Heart left ventricle (tissue), 16 donors: ENCODE measurements at regions of chr2 and their contacts with region 1.

Region 1: GRCh38 chr2:70919672-70920366 is 15.9 kb upstream of the ATP6V1B1 start:
- DNase-seq: peak; percentile 75 to 89 (median 78)
- ATAC-seq: peak in 3 of 4 donors; percentile 84 to 91 (median 87)
- H3K4me3 ChIP-seq: no peak overlapping the region
- H3K27ac ChIP-seq: no peak overlapping the region
- H3K4me1 ChIP-seq: peaks cover 0 to 3% (median 0%) of the 10 kb centered on the region in 12 donors
- H3K27me3 ChIP-seq: peaks cover 0 to 25% (median 13%) of the 10 kb centered on the region in 9 donors
- CTCF ChIP-seq: peak; percentile 81 to 94 (median 89)
- POLR2A ChIP-seq: no peak

Region 2: DNA sequence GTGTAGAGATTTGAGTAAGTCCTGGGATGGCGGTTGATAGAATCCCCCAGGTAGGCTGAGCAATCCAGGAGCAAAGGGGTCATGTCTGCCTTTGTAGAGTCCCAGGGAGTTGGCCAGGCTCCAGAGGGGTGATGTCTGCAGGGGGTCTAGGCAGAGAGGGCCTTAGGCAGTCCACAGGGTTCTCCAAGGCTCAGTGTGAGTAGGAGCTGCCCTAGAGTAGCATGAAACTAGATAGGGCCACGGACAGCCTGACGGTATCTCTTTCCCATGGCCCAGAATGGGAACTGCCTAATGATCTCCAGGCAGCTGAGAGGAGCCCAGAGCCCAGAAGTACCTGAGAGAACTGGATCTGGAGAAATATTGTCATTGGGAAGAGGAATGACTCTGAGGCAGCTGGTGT is 608.9 kb before region 1 on chr2:
- intact Hi-C with region 1: loop called in 1 of 10 experiments (anchors 10 kb)
- DNase-seq: no peak
- ATAC-seq: no peak
- H3K4me3 ChIP-seq: no peak overlapping the region
- H3K27ac ChIP-seq: no peak overlapping the region
- H3K4me1 ChIP-seq: no peaks in the 10 kb centered on the region
- H3K27me3 ChIP-seq: peaks cover 0 to 10% (median 0%) of the 10 kb centered on the region in 9 donors
- CTCF ChIP-seq: no peak
- POLR2A ChIP-seq: no peak

Region 3: GRCh38 chr2:70656421-70657010 is 263.3 kb before region 1 on chr2:
- intact Hi-C with region 1: loop called in 1 of 10 experiments (anchors 10 kb)
- DNase-seq: no peak
- ATAC-seq: no peak
- H3K4me3 ChIP-seq: no peak overlapping the region
- H3K27ac ChIP-seq: no peak overlapping the region
- H3K4me1 ChIP-seq: no peaks in the 10 kb centered on the region
- H3K27me3 ChIP-seq: peaks cover 0 to 48% (median 7%) of the 10 kb centered on the region in 9 donors
- CTCF ChIP-seq: no peak
- POLR2A ChIP-seq: no peak

Region 4: DNA sequence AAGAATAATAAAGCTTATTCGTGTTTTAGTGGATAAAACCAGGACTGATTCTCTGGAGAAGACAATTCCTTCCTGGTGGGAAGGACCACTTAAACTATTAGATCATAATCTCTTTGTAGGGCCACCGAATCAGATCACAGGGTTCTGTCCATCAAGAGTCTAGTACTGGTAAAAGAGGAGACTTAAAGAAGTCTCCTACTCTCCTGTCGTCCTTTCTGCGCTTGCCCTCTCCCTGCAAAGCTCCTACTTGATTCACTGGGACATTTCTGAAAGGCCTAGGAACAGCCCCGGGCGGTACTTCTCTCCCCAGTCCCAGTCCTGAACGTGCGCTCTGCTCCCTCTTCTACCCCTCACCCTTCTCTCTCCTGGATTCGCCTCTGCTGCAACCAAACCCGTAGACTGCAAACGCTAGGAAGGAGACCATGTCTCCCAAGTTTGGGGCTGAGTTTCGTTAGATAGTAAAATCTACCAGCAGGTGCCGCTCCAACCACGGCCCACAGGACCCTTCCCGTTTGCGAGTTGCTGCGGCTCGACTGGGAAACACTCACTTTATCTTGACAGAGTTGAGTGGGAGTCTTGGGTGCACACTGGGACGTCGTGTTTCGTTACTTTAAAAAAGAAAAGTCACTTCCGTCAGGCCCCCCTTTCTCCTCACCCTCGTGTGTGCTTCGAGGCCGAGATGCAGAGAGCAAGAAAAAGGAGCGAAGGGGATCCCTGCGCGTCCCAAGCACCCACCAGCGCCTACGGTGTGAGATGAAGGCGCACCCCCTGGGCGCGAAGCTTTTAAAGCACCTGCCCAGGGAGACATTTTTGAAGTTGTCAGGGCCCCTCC is 130.3 kb before region 1 on chr2:
- intact Hi-C with region 1: loop called in 1 of 10 experiments (anchors 10 kb)
- DNase-seq: peak; percentile 52 to 74 (median 54)
- ATAC-seq: peak; percentile 54 to 88 (median 78)
- H3K4me3 ChIP-seq: peak overlapping the region in 11 of 12 donors; percentile 11 to 49 (median 34)
- H3K27ac ChIP-seq: no peak overlapping the region
- H3K4me1 ChIP-seq: peaks cover 0 to 32% (median 8%) of the 10 kb centered on the region in 12 donors
- H3K27me3 ChIP-seq: peaks cover 11 to 73% (median 32%) of the 10 kb centered on the region in 9 donors
- CTCF ChIP-seq: peak; percentile 44 to 71 (median 60)
- POLR2A ChIP-seq: no peak

Region 5: GRCh38 chr2:70871398-70872211 is 48.2 kb before region 1 on chr2:
- intact Hi-C with region 1: loop called in 9 of 10 experiments (anchors 1 to 5 kb)
- DNase-seq: peak; percentile 83 to 92 (median 87)
- ATAC-seq: peak; percentile 89 to 97 (median 96)
- H3K4me3 ChIP-seq: peak overlapping the region in 3 of 12 donors; percentile 2 to 25 (median 15)
- H3K27ac ChIP-seq: no peak overlapping the region
- H3K4me1 ChIP-seq: peaks cover 0 to 13% (median 0%) of the 10 kb centered on the region in 12 donors
- H3K27me3 ChIP-seq: peaks cover 0 to 68% (median 44%) of the 10 kb centered on the region in 9 donors
- CTCF ChIP-seq: peak; percentile 87 to 93 (median 91)
- POLR2A ChIP-seq: no peak

Region 6: DNA sequence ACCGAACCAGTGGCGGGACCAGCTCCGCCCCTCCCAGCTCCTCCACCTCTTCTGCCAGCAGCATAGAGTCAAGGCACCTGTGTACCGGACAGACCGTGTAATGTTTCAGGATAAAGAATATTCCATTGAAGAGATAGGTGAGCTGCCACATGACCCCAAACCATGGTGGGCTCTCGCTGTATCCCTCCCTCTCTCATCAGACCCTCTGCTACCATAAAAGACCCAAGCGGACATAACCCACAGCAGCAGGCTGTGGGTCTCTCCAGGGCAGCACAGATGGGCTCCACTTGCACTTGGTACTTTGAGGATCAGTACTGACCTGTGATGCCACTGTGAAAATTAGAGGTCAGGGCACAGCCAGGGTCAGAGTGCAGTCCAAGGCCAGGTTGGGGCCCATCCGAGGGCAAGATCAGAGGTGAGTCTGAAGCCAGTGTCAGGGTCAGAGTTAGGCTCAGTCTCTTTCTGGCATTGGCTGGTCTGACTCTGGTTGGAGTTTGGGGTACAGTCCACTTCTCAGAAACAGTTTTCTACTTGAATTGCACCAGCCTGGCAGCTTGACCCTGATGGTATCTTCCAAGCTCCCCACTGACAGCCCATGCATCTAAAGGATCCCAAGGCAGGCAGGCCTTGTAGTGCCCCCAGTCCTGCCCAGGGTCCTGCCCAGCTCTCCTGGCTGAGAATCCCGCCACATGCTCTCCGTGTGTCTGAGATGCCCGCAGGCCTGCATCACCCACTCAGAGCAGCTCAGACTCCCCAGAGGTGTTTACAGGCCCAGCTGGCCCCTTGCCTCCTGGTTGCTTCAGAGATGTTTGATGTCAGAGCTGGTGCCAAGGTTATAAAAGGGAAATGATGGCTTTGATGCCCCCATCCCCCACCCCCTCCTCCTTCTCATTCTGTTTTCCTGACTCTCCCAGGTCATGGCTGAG is 745.6 kb after region 1 on chr2:
- intact Hi-C with region 1: no loop called
- DNase-seq: peak; percentile 41 to 80 (median 51)
- ATAC-seq: peak; percentile 74 to 92 (median 83)
- H3K4me3 ChIP-seq: no peak overlapping the region
- H3K27ac ChIP-seq: peak overlapping the region in 1 of 12 donors; percentile 28
- H3K4me1 ChIP-seq: peaks cover 0 to 11% (median 0%) of the 10 kb centered on the region in 12 donors
- H3K27me3 ChIP-seq: no peaks in the 10 kb centered on the region
- CTCF ChIP-seq: no peak
- POLR2A ChIP-seq: no peak